ENCODE measurements at regions of chr15 and their contacts with region 1.

Region 1: GRCh38 chr15:74884428-74885223 is 5.2 kb upstream of the MPI start:
- DNase-seq: no peak
- H3K4me3 ChIP-seq: no peak overlapping the region
- H3K27ac ChIP-seq: no peak overlapping the region
- H3K4me1 ChIP-seq: peaks cover 0 to 26% (median 4%) of the 10 kb centered on the region in 4 donors
- H3K27me3 ChIP-seq: no peaks in the 10 kb centered on the region
- CTCF ChIP-seq: no peak
- EP300 ChIP-seq: no peak
- POLR2A ChIP-seq: no peak

Region 2: GRCh38 chr15:74752491-74753020 is 132.1 kb before region 1 on chr15:
- in situ Hi-C with region 1: no loop called
- intact Hi-C with region 1: no loop called
- DNase-seq: no peak
- H3K4me3 ChIP-seq: no peak overlapping the region
- H3K27ac ChIP-seq: no peak overlapping the region
- H3K4me1 ChIP-seq: no peaks in the 10 kb centered on the region
- H3K27me3 ChIP-seq: no peaks in the 10 kb centered on the region
- CTCF ChIP-seq: no peak
- EP300 ChIP-seq: no peak
- POLR2A ChIP-seq: no peak

Region 3: GRCh38 chr15:74895830-74896229 is 11.2 kb after region 1 on chr15:
- in situ Hi-C with region 1: no loop called
- intact Hi-C with region 1: loop called (anchors 1 kb)
- DNase-seq: no peak
- H3K4me3 ChIP-seq: no peak overlapping the region
- H3K27ac ChIP-seq: no peak overlapping the region
- H3K4me1 ChIP-seq: peaks cover 3 to 25% (median 21%) of the 10 kb centered on the region in 4 donors
- H3K27me3 ChIP-seq: no peaks in the 10 kb centered on the region
- CTCF ChIP-seq: no peak
- EP300 ChIP-seq: no peak
- POLR2A ChIP-seq: no peak

Measured in transverse colon (tissue), 4 donors.